Posterior cingulate gyrus (tissue), 11 donors: ENCODE measurements at regions of chr5 and their contacts with region 1.

Region 1: DNA sequence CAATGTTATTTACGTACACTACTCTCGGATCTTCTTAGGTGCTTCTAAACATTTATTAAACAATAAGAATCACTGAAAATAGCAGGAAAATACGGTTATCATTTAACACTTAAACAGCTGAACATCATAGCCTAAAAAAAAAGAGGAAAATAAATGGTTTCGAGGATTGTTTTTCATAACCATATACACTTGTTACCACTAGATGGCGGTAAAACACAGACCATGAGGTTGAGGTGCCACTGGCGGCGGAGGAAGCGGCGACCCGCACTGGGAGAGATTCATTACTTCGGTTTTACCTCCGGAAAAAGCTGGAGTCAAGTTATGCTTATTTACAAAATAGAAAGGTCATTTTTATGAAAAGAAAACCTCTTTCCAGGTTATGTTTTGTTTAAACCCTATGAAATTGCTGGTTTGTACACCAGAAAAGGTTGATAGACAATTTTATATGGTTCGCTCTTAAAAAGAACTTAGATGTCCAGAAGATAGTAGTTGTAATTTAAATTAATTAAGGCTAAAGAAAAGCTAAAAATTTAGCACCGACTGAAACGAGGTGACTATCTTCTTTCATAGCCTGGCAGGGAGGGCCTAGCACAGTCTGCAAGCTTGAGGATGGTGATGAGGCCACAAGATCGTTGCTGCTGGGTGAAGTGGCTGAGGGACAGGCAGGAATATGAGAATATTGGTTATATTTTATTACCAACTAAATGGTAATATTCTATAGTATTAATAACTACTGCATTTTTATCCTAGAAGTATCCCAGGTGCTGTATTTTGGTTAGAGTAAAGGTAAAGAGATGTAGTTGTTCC is 605.7 kb downstream of the RAB3C start:
- DNase-seq: peak; percentile 47 to 96 (median 68)

Region 2: DNA sequence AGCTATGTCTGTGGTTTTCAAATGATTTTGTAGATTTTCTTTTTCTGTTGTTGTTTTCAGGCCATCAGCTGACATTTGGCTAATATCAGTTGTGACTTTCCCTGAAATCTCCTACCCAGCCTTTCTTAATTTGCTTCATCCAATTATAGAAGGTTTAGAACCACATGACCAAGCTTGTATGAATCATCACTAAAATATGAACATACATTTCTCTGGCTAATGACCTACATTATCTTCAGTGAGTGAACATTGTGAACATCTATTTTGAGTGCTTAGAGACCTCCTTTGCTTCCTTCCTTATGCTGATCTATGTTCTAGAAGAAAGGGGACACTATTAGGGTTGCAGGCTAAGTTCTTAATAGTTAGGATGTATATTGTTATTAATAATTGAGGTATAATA is 73.3 kb before region 1 on chr5:
- intact Hi-C with region 1: no loop called
- DNase-seq: no peak

Region 3: DNA sequence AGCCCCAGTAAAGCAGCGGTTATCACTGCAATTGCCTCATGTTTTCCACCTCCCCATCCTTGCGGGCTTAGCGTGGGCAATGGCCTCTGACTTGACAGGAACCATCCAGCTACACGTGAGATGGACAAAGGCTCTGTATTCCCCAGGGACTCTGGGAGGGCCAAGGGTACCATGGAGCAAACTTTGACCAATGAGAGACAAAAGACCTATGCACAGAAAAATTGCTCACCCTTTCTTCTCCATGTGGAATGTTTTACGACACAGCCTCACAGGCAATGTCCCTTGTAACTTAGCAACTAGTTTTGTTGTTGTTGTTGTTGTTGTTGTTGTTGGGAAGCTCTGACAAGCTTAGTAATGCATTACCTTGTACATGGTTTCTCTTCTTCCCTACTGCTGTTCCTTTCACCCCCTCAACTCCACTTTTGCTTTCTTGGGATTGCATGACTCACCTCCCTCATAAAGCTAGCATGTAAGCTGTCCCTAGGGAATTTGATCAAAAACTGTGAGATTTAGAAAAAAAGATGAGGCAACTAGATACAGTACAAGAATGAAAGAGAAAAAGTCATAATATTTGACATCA is 54.9 kb before region 1 on chr5:
- intact Hi-C with region 1: no loop called
- DNase-seq: no peak

Region 4: DNA sequence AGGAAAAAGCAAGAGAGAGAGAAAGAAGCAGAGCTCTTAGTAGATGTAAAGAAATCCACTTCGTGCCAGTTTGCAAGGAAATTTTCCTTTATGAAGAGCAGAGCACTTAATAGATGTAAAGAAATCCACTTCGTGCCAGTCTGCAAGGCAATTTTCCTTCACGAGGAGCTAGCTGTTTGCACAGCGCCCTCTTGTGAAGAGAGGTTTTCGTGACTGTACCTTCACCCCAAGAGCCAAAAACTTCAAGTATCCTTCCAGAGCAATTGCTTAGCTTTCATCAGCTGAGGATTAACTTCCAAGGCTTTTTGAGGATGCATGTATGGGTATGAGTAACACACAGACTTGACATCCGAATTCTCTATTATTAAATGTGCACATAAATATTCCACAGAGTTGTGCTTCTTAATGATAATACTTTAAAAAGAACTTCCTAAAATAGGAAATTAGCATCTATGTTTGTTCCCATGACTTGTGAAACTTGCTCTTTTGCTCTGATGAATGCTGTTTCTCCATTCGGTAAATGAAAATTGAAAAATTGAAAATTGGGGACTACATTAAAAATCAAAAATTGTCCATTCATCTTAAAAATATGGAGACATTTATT is 179.3 kb after region 1 on chr5:
- intact Hi-C with region 1: loop called (anchors 1 kb)
- DNase-seq: peak in 8 of 10 donors; percentile 15 to 90 (median 60)

Region 5: GRCh38 chr5:59380350-59380951 is 191.8 kb after region 1 on chr5:
- intact Hi-C with region 1: loop called (anchors 1 kb)
- DNase-seq: no peak

Region 6: DNA sequence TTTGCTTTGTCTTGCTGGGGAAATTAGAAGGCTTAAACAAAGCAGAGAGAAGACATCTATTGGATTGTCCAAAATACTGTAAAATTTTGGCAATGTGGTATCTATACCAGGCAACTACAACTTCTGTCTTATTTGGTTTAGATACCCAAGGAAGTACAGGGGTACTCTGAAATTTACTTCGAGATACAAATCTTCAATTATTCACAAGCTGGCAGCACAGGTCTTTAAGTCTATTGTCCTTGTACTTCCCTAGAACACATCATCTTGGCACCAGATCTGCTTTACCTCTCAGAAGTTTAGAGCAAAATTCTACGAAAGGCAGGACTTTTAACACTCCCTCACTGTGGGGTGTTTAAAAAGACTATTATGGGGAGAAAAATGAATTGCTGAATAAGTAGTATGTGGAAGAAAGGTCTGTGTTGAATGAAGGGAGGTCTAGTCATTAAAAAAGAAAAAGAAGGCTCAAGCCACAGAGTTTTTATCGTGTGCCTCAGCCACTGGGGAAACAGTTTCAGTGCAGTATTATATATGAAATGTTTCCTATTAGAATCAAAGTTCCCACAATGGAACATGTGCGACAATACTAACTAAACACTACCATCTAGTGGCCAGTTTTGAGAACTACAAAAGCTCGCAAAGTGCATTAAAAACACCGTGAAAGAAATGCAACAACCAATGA is 611.2 kb after region 1 on chr5:
- intact Hi-C with region 1: loop called (anchors 10 kb)
- DNase-seq: no peak